ENCODE measurements at regions of chr12 and their contacts with region 1.

Region 1: DNA sequence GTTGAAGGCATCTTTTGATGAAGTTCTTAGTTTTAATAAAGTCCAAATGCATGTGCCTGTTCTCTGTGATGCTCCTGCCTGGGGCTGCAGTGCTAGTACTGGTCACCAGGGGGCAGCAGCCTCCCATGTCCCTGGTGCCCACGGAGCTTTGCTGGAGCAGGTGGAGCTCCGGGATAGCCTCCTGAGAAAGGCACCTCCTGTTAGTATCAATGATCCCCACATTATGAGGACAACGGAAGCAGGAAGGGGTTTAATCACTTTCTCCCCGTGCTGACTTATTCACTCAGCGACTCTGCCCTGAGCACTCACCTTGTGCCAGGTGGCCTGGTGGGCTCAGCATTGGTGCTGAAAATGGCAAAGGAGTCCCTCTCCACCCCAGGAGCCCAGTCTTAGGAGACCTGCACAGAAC is 123.0 kb upstream of the PZP start:
- DNase-seq: no peak
- H3K4me3 ChIP-seq: no peak overlapping the region
- H3K27ac ChIP-seq: no peak overlapping the region
- H3K27me3 ChIP-seq: no peaks in the 10 kb centered on the region
- CTCF ChIP-seq: peak; percentile 99

Region 2: DNA sequence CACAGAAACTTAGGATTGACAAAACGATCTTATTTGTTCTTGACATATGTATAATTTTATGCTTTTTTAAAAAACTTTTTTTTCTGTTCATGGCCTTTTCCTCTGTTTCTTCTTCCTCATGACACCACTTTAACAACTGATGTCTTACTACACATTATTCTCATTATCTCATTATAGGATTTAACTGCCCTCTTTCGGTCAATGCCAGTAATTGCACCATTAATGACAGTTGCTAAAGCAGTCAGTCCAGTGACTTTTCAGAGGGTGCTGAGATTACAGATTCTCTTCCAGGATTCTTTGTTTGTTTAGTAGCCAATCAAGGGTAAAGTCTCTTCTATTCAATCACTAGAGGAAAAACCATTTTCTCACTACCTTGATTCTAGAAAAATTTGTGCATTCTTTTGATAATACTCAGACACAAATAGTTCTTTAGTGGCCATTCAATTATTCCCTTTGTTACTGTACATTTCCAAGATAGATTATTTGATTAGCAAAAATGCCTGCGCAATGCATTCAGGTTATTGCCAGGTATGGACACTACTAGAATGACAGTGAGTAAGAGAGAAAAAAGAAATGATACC is 291.7 kb before region 1 on chr12:
- CTCF ChIA-PET with region 1: no interaction called
- POLR2A ChIA-PET with region 1: no interaction called
- DNase-seq: peak; percentile 4
- H3K4me3 ChIP-seq: no peak overlapping the region
- H3K27ac ChIP-seq: no peak overlapping the region
- H3K27me3 ChIP-seq: no peaks in the 10 kb centered on the region
- CTCF ChIP-seq: peak; percentile 75

Region 3: GRCh38 chr12:9115731-9116559 is 215.3 kb before region 1 on chr12 and contains the start of gene A2M:
- CTCF ChIA-PET with region 1: no interaction called
- POLR2A ChIA-PET with region 1: no interaction called
- DNase-seq: no peak
- H3K4me3 ChIP-seq: no peak within 1 kb of the TSS
- H3K27ac ChIP-seq: no peak within 1 kb of the TSS
- H3K27me3 ChIP-seq: no peaks in the 10 kb centered on the region
- CTCF ChIP-seq: no peak
- polyA plus RNA-seq, gene A2M: 0.48 and 1.2 TPM in 2 replicates

Region 4: GRCh38 chr12:9464408-9464807 is 133.2 kb after region 1 on chr12:
- CTCF ChIA-PET with region 1: interaction called, 82 read pairs
- POLR2A ChIA-PET with region 1: no interaction called
- DNase-seq: no peak
- H3K4me3 ChIP-seq: no peak overlapping the region
- H3K27ac ChIP-seq: no peak overlapping the region
- H3K27me3 ChIP-seq: no peaks in the 10 kb centered on the region
- CTCF ChIP-seq: no peak

Measured in AG04450 (cell line).